ENCODE measurements at regions of chr10 and their contacts with region 1.

Region 1: DNA sequence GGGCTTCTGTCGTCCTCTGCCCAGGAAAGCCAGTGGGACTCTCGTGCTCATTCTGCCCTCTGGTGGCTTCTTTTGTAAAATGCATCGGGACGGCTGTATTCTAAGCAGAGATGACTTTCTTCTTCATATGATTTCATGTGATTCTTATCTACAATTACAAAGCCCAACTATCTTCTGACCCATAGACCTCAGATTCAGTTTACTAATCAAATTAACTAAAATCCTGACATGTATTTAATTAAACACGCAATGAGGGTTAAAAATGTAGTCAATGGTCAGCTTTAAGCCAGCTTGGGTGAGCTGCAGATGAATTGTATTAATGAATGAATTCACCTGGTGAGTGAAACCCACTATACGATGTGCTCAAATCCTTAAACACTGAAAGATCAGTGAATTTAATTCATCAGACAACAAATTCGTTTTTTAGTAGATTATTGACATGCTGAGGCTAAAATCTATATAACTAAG is 117.6 kb upstream of the FAM204A start:
- DNase-seq: peak; percentile 52
- H3K4me3 ChIP-seq: no peak overlapping the region
- H3K27ac ChIP-seq: no peak overlapping the region
- H3K4me1 ChIP-seq: no peaks in the 10 kb centered on the region
- H3K27me3 ChIP-seq: no peaks in the 10 kb centered on the region
- CTCF ChIP-seq: peak; percentile 67 to 84

Region 2: DNA sequence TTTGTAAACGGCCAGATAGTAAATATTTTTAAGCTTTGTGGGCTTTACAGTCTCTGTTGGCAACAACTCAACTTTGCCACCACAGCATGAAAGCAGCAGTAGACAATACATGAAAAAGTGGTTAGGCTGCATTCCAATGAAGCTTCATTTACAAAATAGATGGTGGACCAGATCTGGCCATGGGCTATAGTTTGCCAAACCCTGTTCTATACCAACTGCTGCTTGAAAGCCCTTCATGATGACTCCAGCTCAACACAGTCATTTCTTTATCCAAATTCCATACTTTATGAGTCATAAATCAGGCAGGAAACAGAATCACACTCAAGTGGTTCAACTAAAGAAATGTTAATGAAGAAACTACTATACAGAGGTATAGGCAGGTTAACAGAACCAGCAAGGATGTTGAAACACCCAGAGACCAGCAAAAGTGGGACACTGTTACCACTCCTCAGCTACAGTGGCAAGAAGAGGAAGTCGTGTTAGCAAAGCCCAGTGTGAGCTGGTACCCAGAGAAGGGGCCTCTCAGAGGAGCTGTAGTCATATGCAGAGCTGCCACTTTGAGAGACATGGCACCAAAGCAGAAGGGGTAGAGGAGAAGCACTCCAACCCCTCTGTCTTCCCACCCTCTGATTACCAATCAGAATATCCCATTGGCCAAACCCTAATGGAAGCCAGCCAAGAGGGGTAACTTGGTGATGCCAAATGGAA is 63.2 kb after region 1 on chr10:
- CTCF ChIA-PET with region 1: no interaction called
- dilution Hi-C with region 1: no loop called
- in situ Hi-C with region 1: no loop called
- intact Hi-C with region 1: loop called (anchors 1 kb)
- DNase-seq: peak; percentile 96
- H3K4me3 ChIP-seq: no peak overlapping the region
- H3K27ac ChIP-seq: peak overlapping the region; percentile 84
- H3K4me1 ChIP-seq: peaks cover 31% of the 10 kb centered on the region
- H3K27me3 ChIP-seq: no peaks in the 10 kb centered on the region
- CTCF ChIP-seq: no peak

Measured in mammary epithelial cell (primary cell).